Caco-2 (cell line): ENCODE measurements at regions of chr20 and their contacts with region 1.

Region 1: GRCh38 chr20:17536944-17537444 is 5.8 kb upstream of the BFSP1 start:
- DNase-seq: peak; percentile 87 to 89
- H3K4me3 ChIP-seq: no peak overlapping the region
- H3K4me3 Mint-ChIP-seq: no peak overlapping the region
- H3K27ac Mint-ChIP-seq: peak overlapping the region; percentile 63
- H3K4me1 ChIP-seq: peaks cover 7% of the 10 kb centered on the region; the same call in 1 of the 2 replicates
- H3K4me1 Mint-ChIP-seq: peaks cover 15% of the 10 kb centered on the region
- H3K27me3 ChIP-seq: no peaks in the 10 kb centered on the region
- H3K27me3 Mint-ChIP-seq: no peaks in the 10 kb centered on the region
- CTCF ChIP-seq: peak; percentile 97 to 98

Region 2: GRCh38 chr20:17442588-17442987 is 94.4 kb before region 1 on chr20:
- CTCF ChIA-PET with region 1: no interaction called
- POLR2A ChIA-PET with region 1: no interaction called
- intact Hi-C with region 1: loop called (anchors 10 kb)
- DNase-seq: peak in 1 of 2 experiments; percentile 27
- H3K4me3 ChIP-seq: no peak overlapping the region
- H3K4me3 Mint-ChIP-seq: no peak overlapping the region
- H3K27ac Mint-ChIP-seq: no peak overlapping the region
- H3K4me1 ChIP-seq: peaks cover 31% of the 10 kb centered on the region
- H3K4me1 Mint-ChIP-seq: peaks cover 23% of the 10 kb centered on the region
- H3K27me3 ChIP-seq: no peaks in the 10 kb centered on the region
- H3K27me3 Mint-ChIP-seq: no peaks in the 10 kb centered on the region
- CTCF ChIP-seq: peak in 1 of 2 experiments; percentile 18

Region 3: DNA sequence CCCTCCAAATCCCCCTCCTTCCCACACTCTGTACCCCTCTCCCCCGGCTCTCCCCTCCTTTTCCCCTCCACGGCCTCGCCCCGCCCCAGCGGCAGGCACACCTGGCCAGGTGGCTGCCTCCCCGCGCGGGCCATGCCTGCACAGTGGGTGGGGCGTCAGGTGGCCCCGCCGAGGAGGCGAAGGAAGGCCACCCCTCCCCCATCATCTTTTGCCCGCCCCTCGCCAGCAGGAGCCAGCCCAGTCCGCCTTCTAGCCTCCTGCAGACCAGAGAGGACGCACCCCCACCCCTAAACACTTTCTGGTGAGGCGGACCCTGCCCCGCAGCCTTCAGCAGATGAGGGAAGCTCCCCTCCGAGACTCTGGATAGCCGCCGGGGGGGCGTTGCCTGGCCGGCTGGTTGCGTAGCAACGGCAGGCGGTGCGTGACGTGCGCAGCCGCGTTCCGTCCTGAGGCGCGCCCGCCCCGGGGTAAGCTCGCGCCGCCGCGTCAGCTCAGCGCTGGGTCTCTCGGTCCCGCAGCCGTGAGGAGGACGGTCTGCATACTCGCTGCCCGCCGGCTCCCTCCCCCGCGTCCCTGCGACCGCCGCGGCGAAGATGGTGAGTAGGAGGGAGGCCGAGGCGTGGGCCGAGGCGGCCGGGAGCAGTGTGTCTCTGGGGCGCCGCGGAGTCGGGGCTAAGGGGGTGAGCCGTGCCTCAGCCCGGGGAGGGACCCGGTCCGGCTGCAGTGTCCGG is 32.8 kb after region 1 on chr20 and contains the start of gene DSTN:
- CTCF ChIA-PET with region 1: interaction called, 10 read pairs
- POLR2A ChIA-PET with region 1: interaction called, 22 read pairs
- intact Hi-C with region 1: loop called (anchors 1 kb)
- DNase-seq: peak; percentile 99 to 100
- H3K4me3 ChIP-seq: peak within 1 kb of the TSS; percentile 98
- H3K4me3 Mint-ChIP-seq: peak within 1 kb of the TSS; percentile 73
- H3K27ac Mint-ChIP-seq: peak within 1 kb of the TSS; percentile 87
- H3K4me1 ChIP-seq: peaks cover 23% of the 10 kb centered on the region
- H3K4me1 Mint-ChIP-seq: peaks cover 32% of the 10 kb centered on the region
- H3K27me3 ChIP-seq: no peaks in the 10 kb centered on the region
- H3K27me3 Mint-ChIP-seq: no peaks in the 10 kb centered on the region
- CTCF ChIP-seq: no peak
- total RNA-seq, gene DSTN: 313 and 318 TPM in 2 replicates

Region 4: DNA sequence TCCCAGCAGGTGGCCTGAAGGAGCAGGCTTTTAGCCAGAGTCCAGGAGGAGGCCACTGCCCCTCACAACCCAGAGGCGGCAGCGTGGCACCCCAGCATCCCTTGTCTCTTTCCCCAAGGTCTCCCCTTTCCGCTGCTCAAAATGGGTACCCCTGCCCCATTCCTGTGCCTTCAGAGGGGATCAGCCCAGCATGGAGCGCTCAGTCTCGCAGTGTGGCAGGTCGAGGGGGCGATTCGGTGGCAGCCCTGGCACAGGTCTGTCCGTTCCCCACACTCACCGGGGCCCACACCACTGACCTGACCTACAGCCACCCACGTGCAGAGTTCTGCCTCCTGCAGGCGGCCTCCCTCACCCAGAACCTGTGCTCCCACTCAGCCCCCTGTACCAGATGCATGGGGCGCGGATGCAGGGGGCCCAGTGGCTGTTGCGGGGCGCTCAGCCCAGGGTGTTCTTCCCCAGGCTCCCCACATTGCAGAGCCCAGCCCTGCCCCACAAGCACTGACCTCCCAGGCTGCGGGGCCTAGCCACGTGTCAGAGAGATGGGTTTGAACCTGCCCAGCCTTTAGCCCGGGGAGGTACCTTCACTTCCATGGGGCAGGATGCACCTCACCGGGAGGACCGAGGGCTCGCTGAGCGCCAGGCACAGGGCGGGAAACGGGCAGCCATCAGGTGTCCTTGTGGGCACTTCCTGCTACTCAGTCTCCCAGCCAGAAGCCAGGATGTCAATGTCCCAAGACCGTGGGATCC is 74.7 kb after region 1 on chr20:
- CTCF ChIA-PET with region 1: interaction called, 8 read pairs
- POLR2A ChIA-PET with region 1: no interaction called
- intact Hi-C with region 1: loop called (anchors 1 kb)
- DNase-seq: peak; percentile 81
- H3K4me3 ChIP-seq: no peak overlapping the region
- H3K4me3 Mint-ChIP-seq: peak overlapping the region; percentile 20
- H3K27ac Mint-ChIP-seq: peak overlapping the region; percentile 63
- H3K4me1 ChIP-seq: no peaks in the 10 kb centered on the region
- H3K4me1 Mint-ChIP-seq: peaks cover 5% of the 10 kb centered on the region
- H3K27me3 ChIP-seq: no peaks in the 10 kb centered on the region
- H3K27me3 Mint-ChIP-seq: no peaks in the 10 kb centered on the region
- CTCF ChIP-seq: peak in 1 of 2 experiments; percentile 71

Region 5: GRCh38 chr20:17898548-17898994 is 361.6 kb after region 1 on chr20:
- CTCF ChIA-PET with region 1: interaction called, 3 read pairs
- POLR2A ChIA-PET with region 1: no interaction called
- intact Hi-C with region 1: loop called (anchors 5 kb)
- DNase-seq: peak; percentile 71 to 81
- H3K4me3 ChIP-seq: no peak overlapping the region
- H3K4me3 Mint-ChIP-seq: no peak overlapping the region
- H3K27ac Mint-ChIP-seq: peak overlapping the region; percentile 29
- H3K4me1 ChIP-seq: peaks cover 4% of the 10 kb centered on the region; the same call in 1 of the 2 replicates
- H3K4me1 Mint-ChIP-seq: peaks cover 4% of the 10 kb centered on the region
- H3K27me3 ChIP-seq: no peaks in the 10 kb centered on the region
- H3K27me3 Mint-ChIP-seq: no peaks in the 10 kb centered on the region
- CTCF ChIP-seq: peak; percentile 85 to 97

Region 6: GRCh38 chr20:17995967-17996819 is 459.2 kb after region 1 on chr20:
- CTCF ChIA-PET with region 1: interaction called, 3 read pairs
- POLR2A ChIA-PET with region 1: no interaction called
- intact Hi-C with region 1: loop called (anchors 2 kb)
- DNase-seq: peak in 1 of 2 experiments; percentile 59
- H3K4me3 ChIP-seq: no peak overlapping the region
- H3K4me3 Mint-ChIP-seq: no peak overlapping the region
- H3K27ac Mint-ChIP-seq: no peak overlapping the region
- H3K4me1 ChIP-seq: peaks cover 6% of the 10 kb centered on the region
- H3K4me1 Mint-ChIP-seq: peaks cover 12% of the 10 kb centered on the region
- H3K27me3 ChIP-seq: no peaks in the 10 kb centered on the region
- H3K27me3 Mint-ChIP-seq: no peaks in the 10 kb centered on the region
- CTCF ChIP-seq: peak; percentile 88 to 94